ENCODE measurements at regions of chrX and their contacts with region 1.

Region 1: GRCh38 chrX:15242899-15243555 is 26.9 kb downstream of the ASB9 start:
- DNase-seq: peak; percentile 12
- ATAC-seq: no peak
- H3K4me3 ChIP-seq: no peak overlapping the region
- H3K27ac ChIP-seq: no peak overlapping the region
- H3K4me1 ChIP-seq: no peaks in the 10 kb centered on the region
- H3K27me3 ChIP-seq: no peaks in the 10 kb centered on the region
- CTCF ChIP-seq: peak; percentile 44
- EP300 ChIP-seq: no peak
- POLR2A ChIP-seq: no peak
- RAD21 ChIP-seq: no peak

Region 2: DNA sequence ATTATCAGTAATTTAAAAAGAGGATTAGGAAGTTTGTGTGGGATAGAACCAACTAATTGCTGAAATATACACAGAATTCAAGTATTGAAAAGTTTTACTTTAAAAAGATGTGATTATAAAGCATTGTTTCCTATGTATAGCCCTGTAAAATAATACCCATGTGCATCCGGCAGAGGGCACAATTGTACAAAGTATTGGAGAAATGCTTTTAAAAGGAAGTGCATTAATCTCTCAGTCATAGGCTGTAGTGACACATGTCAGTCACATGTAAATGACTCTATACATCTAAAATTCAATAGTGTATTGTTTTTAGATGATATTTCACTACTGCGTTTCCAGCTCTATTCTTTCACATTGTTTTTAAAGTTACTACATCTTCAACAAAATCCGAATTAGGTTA is 1203.7 kb before region 1 on chrX:
- CTCF ChIA-PET with region 1: interaction called, 10 read pairs
- POLR2A ChIA-PET with region 1: no interaction called
- in situ Hi-C with region 1: no loop called
- intact Hi-C with region 1: loop called (anchors 1 kb)
- DNase-seq: peak; percentile 28
- ATAC-seq: peak; percentile 62; the same call in 2 of the 3 replicates
- H3K4me3 ChIP-seq: no peak overlapping the region
- H3K27ac ChIP-seq: no peak overlapping the region
- H3K4me1 ChIP-seq: peaks cover 12% of the 10 kb centered on the region; the same call in 1 of the 2 replicates
- H3K27me3 ChIP-seq: no peaks in the 10 kb centered on the region
- CTCF ChIP-seq: peak; percentile 60
- EP300 ChIP-seq: no peak
- POLR2A ChIP-seq: no peak
- RAD21 ChIP-seq: no peak

Region 3: DNA sequence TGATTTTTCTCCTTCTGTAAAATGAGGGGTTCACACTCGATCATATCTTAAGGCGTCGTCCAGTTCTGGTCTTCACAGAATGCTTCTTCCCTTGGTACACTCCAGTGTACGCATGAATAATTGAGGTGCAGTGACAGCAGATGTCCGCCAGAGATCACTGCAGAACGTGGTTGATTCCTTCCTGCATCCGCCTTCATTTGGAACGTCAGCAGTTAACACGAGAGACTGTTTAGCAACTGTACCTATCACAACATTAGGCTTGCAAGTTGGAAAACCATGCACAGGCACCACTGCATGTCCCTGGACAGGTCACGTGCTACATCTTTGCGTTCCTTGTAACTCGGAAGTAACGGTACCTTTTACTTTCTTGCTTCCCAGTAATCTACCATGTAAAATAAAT is 1147.3 kb before region 1 on chrX:
- CTCF ChIA-PET with region 1: interaction called, 4 read pairs
- POLR2A ChIA-PET with region 1: no interaction called
- in situ Hi-C with region 1: no loop called
- intact Hi-C with region 1: loop called (anchors 5 kb)
- DNase-seq: peak; percentile 47
- ATAC-seq: peak; percentile 89
- H3K4me3 ChIP-seq: no peak overlapping the region; a peak in 1 of 6 replicates
- H3K27ac ChIP-seq: no peak overlapping the region
- H3K4me1 ChIP-seq: no peaks in the 10 kb centered on the region
- H3K27me3 ChIP-seq: no peaks in the 10 kb centered on the region; a peak in 1 of 5 replicates
- CTCF ChIP-seq: peak; percentile 83
- EP300 ChIP-seq: no peak
- POLR2A ChIP-seq: no peak
- RAD21 ChIP-seq: peak; percentile 47; the same call in 1 of the 2 replicates

Region 4: DNA sequence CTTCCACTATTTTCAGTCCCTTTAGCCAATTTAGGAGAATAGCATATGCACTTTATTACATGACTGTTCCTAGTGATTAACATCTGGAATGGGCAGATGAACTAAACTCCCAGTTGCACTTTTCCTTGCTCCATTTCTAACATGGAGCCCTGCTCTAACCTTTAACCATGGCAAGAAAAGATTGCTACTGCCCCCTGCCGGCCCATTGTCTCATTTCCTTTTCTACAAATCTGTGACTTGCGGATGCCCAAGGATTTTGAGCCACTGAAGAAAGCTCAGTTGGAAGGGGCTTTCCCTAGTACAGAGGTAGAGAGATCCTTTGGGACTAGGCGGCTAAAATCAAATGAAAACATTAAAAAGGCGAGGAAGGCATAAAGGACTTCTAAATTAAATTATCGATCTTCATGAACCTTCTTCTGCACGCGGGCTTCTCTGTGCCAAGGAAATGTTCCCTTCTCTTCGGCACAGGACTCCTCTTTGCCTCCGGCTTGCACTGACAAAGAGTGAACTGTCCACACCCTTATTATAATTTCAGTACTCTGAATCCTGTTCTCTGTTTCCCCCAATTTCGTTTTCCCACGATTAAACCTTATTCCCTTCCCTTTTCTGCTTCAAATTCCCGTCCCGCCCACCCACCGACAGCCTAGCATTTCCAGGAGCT is 714.3 kb before region 1 on chrX:
- CTCF ChIA-PET with region 1: no interaction called
- POLR2A ChIA-PET with region 1: no interaction called
- in situ Hi-C with region 1: no loop called
- intact Hi-C with region 1: loop called (anchors 2 kb)
- DNase-seq: peak; percentile 10
- ATAC-seq: peak; percentile 61
- H3K4me3 ChIP-seq: no peak overlapping the region
- H3K27ac ChIP-seq: no peak overlapping the region
- H3K4me1 ChIP-seq: no peaks in the 10 kb centered on the region
- H3K27me3 ChIP-seq: no peaks in the 10 kb centered on the region
- CTCF ChIP-seq: peak; percentile 51
- EP300 ChIP-seq: no peak
- POLR2A ChIP-seq: no peak
- RAD21 ChIP-seq: no peak

Region 5: GRCh38 chrX:15194146-15194545 is 48.9 kb before region 1 on chrX:
- CTCF ChIA-PET with region 1: no interaction called
- POLR2A ChIA-PET with region 1: no interaction called
- in situ Hi-C with region 1: no loop called
- intact Hi-C with region 1: no loop called
- DNase-seq: no peak
- ATAC-seq: no peak
- H3K4me3 ChIP-seq: no peak overlapping the region
- H3K27ac ChIP-seq: no peak overlapping the region
- H3K4me1 ChIP-seq: no peaks in the 10 kb centered on the region
- H3K27me3 ChIP-seq: no peaks in the 10 kb centered on the region
- CTCF ChIP-seq: no peak
- EP300 ChIP-seq: no peak
- POLR2A ChIP-seq: no peak
- RAD21 ChIP-seq: no peak

Measured in HepG2 (cell line).